Mammary epithelial cell (primary cell): ENCODE measurements at regions of chr3 and their contacts with region 1.

Region 1: DNA sequence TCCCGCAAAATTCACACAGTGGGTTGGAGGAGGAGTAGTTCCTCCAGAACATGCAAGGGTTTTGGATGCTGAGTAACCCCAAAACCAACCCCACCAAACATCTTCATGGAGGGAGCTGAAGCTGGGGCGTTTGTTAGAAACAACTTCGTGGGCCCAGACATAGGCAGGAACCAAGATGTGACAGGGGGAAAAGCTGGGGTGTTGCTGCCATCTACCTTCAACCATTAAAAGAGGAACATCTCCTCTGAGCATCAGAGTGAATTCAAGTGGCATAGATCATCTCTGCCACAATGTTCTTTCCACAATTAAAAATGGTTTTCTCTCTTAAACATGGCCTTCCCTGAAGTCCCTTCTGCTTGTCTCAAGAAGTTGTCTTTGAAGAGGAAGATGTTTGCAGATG is 20.5 kb downstream of the SIDT1 start:
- DNase-seq: no peak
- H3K4me3 ChIP-seq: no peak overlapping the region
- H3K27ac ChIP-seq: no peak overlapping the region
- H3K4me1 ChIP-seq: peaks cover 14% of the 10 kb centered on the region
- H3K27me3 ChIP-seq: no peaks in the 10 kb centered on the region
- CTCF ChIP-seq: peak in 1 of 2 donors; percentile 24

Region 2: GRCh38 chr3:113057117-113057516 is 495.7 kb before region 1 on chr3:
- CTCF ChIA-PET with region 1: no interaction called
- dilution Hi-C with region 1: no loop called
- in situ Hi-C with region 1: no loop called
- intact Hi-C with region 1: no loop called
- DNase-seq: no peak
- H3K4me3 ChIP-seq: no peak overlapping the region
- H3K27ac ChIP-seq: no peak overlapping the region
- H3K4me1 ChIP-seq: peaks cover 11% of the 10 kb centered on the region
- H3K27me3 ChIP-seq: no peaks in the 10 kb centered on the region
- CTCF ChIP-seq: no peak

Region 3: DNA sequence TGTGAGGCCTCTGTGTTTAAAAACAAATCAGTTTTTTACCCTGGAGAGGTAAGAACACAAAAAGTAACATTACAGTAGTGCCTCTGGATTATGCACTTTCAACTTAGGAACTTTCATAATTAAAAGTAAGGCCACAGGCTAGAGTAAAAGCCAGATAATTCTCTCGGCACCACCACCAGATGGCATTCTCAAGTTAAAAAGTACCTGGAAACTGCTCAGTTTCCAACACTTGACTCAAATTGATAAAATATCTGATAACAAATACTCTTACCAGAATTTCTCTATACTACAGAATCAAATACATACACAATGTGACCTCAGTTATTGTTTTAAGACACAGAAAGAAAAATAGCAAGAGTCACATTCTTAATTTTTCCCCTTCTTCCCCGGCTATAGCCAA is 57.8 kb before region 1 on chr3:
- CTCF ChIA-PET with region 1: interaction called, 11 read pairs
- dilution Hi-C with region 1: no loop called
- in situ Hi-C with region 1: no loop called
- intact Hi-C with region 1: loop called (anchors 1 kb)
- DNase-seq: peak; percentile 27
- H3K4me3 ChIP-seq: no peak overlapping the region
- H3K27ac ChIP-seq: no peak overlapping the region
- H3K4me1 ChIP-seq: no peaks in the 10 kb centered on the region
- H3K27me3 ChIP-seq: no peaks in the 10 kb centered on the region
- CTCF ChIP-seq: peak; percentile 37 to 56

Region 4: DNA sequence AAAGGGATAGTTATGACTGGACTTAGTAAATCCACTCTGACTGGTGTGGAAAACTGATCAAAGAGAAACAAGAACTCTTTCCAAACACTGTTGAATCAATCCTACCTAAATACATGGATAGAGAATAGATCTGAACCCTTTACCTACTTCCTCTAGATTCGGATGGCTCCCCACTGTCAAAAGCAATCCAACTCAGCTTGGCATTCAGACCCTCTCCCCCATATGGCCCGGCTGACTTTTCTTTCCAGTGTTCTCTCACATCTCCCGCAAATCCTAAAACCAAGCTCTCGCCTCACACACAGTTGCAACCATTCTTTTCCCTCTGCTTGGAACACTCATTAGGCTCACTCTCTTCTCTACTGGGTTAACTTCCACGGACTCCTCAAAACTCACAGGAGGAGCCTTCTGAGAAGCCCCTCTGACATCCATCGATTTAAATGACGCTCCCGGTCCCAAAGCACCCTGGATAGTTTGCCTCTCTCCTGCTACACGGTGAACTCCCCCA is 38.5 kb before region 1 on chr3:
- CTCF ChIA-PET with region 1: no interaction called
- dilution Hi-C with region 1: no loop called
- in situ Hi-C with region 1: no loop called
- intact Hi-C with region 1: loop called (anchors 5 kb)
- DNase-seq: no peak
- H3K4me3 ChIP-seq: peak overlapping the region; percentile 65 to 78 (median 71)
- H3K27ac ChIP-seq: peak overlapping the region; percentile 55
- H3K4me1 ChIP-seq: no peaks in the 10 kb centered on the region
- H3K27me3 ChIP-seq: no peaks in the 10 kb centered on the region
- CTCF ChIP-seq: no peak

Region 5: DNA sequence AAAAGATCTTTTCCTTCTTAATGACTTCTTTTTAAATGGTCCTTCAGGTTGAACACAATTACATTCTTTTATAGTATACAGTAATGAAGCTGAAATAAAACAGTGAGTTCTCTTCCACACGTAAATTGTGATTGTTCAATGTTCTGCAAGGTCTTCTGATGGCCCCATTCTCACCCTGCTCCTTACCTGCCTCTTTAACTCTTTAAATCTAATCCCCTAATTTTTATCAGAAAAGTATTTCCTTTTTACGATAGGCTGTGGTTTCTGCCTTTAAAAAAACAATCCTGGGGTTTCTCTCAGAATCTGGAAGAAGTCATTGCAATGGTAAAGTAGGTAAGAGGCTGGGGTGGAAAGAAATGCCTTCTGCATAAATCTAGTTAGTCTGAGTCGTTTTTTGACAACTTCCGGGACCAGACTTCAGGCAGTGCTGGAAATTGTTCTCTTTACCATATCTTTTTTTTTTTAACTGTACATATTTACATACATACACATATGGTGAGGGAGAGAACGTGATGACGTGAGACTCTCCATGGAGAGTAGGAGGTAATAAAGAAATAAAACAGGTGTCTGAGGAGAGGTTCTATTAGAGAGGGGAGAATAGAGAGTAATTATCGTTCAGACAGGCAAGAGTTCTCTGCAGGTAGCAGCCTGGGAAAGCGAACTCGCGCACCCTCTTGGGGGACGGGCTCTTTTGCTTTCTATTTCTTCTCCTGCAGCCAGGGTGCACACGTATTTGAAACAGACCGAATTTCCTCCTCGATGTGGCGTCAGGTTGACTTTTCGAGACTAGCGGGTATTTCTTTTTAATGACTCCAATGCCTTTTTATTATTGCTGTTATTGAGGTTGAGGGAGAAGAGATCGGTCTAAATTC is 20.8 kb before region 1 on chr3 and contains the start of gene SIDT1:
- CTCF ChIA-PET with region 1: no interaction called
- dilution Hi-C with region 1: no loop called
- in situ Hi-C with region 1: no loop called
- intact Hi-C with region 1: loop called (anchors 2 kb)
- DNase-seq: peak; percentile 32
- H3K4me3 ChIP-seq: peak within 1 kb of the TSS; percentile 49 to 62 (median 57)
- H3K27ac ChIP-seq: no peak within 1 kb of the TSS
- H3K4me1 ChIP-seq: peaks cover 19% of the 10 kb centered on the region
- H3K27me3 ChIP-seq: peaks cover 9% of the 10 kb centered on the region
- CTCF ChIP-seq: no peak
- total RNA-seq, gene SIDT1: not detected